Body of pancreas (tissue), 4 donors: ENCODE measurements at regions of chr1 and their contacts with region 1.

Region 1: GRCh38 chr1:116485071-116485735 is 85.6 kb downstream of the CD58 start:
- DNase-seq: peak; percentile 88 to 93 (median 90)
- ATAC-seq: peak; percentile 68
- H3K4me3 ChIP-seq: no peak overlapping the region
- H3K27ac ChIP-seq: peak overlapping the region in 3 of 4 donors; percentile 54 to 75 (median 58)
- H3K4me1 ChIP-seq: peaks cover 42% of the 10 kb centered on the region
- H3K27me3 ChIP-seq: no peaks in the 10 kb centered on the region
- CTCF ChIP-seq: peak; percentile 69 to 93 (median 90)
- POLR2A ChIP-seq: no peak

Region 2: DNA sequence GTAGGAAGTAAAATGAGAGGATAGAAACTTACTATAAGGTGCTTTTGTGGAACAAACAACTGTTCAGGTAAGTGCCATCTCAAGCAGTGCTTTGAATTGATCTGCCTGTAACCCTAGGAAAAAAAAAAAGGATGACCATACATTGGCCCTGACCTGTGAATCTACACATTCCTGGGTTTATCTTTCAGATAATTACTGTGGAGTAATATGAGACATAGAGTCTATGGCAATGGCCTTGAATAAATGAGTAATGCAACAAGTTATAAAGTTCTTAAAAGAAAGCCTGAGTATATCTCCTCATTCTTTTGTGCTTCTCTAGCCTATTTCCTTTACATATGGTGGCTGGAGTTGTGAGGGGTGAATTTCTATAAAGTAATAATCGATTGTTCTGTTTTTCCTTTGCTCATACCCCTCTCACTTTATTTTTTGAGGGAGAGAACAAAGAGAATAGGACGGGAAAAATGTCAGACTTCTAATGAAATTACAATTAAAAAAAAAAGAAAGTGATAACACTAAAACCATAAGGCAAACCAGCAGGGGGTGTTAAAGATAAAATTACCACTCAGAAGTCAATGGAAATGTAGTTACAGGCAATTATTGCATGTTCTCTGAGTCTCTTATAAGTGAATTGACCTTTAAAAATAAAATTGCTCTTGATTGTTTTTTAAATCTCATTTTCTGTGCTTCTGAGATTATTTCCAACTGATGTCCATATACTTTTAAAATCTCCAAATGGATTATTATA is 124.6 kb before region 1 on chr1:
- intact Hi-C with region 1: loop called (anchors 10 kb)
- DNase-seq: no peak
- ATAC-seq: no peak
- H3K4me3 ChIP-seq: no peak overlapping the region
- H3K27ac ChIP-seq: peak overlapping the region in 1 of 4 donors; percentile 44
- H3K4me1 ChIP-seq: peaks cover 17% of the 10 kb centered on the region
- H3K27me3 ChIP-seq: no peaks in the 10 kb centered on the region
- CTCF ChIP-seq: peak; percentile 12 to 55 (median 43)
- POLR2A ChIP-seq: no peak

Region 3: GRCh38 chr1:116679091-116679827 is 194.1 kb after region 1 on chr1:
- intact Hi-C with region 1: no loop called
- DNase-seq: no peak
- ATAC-seq: no peak
- H3K4me3 ChIP-seq: no peak overlapping the region
- H3K27ac ChIP-seq: no peak overlapping the region
- H3K4me1 ChIP-seq: no peaks in the 10 kb centered on the region
- H3K27me3 ChIP-seq: no peaks in the 10 kb centered on the region
- CTCF ChIP-seq: no peak
- POLR2A ChIP-seq: no peak